SK-N-SH (cell line): ENCODE measurements at regions of chr1 and their contacts with region 1.

Region 1: GRCh38 chr1:27603681-27604578 is at the start of gene AHDC1:
- DNase-seq: peak; percentile 95
- H3K4me3 ChIP-seq: peak within 1 kb of the TSS; percentile 92
- H3K27ac ChIP-seq: peak within 1 kb of the TSS; percentile 60 to 72; a peak in 3 of 4 replicates
- H3K4me1 ChIP-seq: peaks cover 33 to 39% of the 10 kb centered on the region in 2 experiments
- H3K27me3 ChIP-seq: no peaks in the 10 kb centered on the region
- CTCF ChIP-seq: no peak
- EP300 ChIP-seq: no peak
- RAD21 ChIP-seq: no peak; the same call in 1 of the 2 replicates
- polyA plus RNA-seq, gene AHDC1: 3.1 and 8.5 TPM in 2 replicates

Region 2: DNA sequence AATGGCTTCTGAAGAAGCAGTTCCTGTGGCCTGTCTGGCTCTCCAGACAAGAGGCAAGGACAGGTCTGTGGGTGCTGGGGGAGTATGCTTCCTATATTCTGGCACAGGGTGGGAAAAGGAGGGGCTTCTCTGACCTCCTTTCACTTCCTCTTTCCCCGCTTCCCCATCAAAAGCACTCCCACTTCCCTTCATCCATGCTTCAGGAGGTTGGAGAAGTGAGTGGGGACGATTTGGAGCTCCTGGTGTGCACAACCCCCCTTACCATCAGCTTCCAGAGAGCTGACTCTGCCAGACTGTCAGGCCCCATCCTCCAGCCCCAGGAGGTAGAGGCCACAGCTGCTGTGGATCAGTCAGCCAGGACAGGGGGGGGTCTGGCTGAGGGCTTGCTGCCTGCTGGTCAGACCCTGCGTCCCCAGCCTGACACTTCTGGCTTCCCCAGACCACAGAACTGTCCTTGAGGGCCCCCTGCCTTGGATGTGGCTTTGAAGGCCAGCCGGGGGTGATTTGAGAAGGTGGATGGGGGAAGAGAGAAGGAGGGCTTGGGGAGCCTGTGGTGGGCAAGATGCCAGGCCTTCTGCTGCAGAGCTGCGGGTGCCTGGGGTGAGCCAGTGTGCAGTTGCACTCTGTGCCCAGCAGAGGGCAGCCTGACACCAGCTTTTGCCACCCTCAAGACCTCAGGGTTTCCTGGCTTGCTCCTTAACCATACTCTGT is 303.4 kb before region 1 on chr1:
- CTCF ChIA-PET with region 1: interaction called, 97 read pairs
- POLR2A ChIA-PET with region 1: interaction called, 3 read pairs
- DNase-seq: peak; percentile 90
- H3K4me3 ChIP-seq: peak overlapping the region; percentile 12 to 14; a peak in 2 of 4 replicates
- H3K27ac ChIP-seq: peak overlapping the region; percentile 92 to 99
- H3K4me1 ChIP-seq: peaks cover 28 to 52% of the 10 kb centered on the region in 2 experiments
- H3K27me3 ChIP-seq: no peaks in the 10 kb centered on the region
- CTCF ChIP-seq: peak; percentile 92
- EP300 ChIP-seq: peak; percentile 40 to 70; a peak in 3 of 4 replicates
- RAD21 ChIP-seq: peak; percentile 96

Region 3: GRCh38 chr1:27392096-27392777 is 211.7 kb before region 1 on chr1 and contains the start of gene GPR3:
- CTCF ChIA-PET with region 1: interaction called, 112 read pairs
- POLR2A ChIA-PET with region 1: interaction called, 5 read pairs
- DNase-seq: peak; percentile 99
- H3K4me3 ChIP-seq: peak within 1 kb of the TSS; percentile 71 to 94
- H3K27ac ChIP-seq: peak within 1 kb of the TSS; percentile 34 to 60; a peak in 2 of 4 replicates
- H3K4me1 ChIP-seq: peaks cover 0 to 28% of the 10 kb centered on the region in 2 experiments; a peak in 2 of 4 replicates
- H3K27me3 ChIP-seq: no peaks in the 10 kb centered on the region; the same call in 1 of the 2 replicates
- CTCF ChIP-seq: peak; percentile 64
- EP300 ChIP-seq: no peak
- RAD21 ChIP-seq: peak; percentile 45
- polyA plus RNA-seq, gene GPR3: 5.8 and 6.0 TPM in 2 replicates

Region 4: DNA sequence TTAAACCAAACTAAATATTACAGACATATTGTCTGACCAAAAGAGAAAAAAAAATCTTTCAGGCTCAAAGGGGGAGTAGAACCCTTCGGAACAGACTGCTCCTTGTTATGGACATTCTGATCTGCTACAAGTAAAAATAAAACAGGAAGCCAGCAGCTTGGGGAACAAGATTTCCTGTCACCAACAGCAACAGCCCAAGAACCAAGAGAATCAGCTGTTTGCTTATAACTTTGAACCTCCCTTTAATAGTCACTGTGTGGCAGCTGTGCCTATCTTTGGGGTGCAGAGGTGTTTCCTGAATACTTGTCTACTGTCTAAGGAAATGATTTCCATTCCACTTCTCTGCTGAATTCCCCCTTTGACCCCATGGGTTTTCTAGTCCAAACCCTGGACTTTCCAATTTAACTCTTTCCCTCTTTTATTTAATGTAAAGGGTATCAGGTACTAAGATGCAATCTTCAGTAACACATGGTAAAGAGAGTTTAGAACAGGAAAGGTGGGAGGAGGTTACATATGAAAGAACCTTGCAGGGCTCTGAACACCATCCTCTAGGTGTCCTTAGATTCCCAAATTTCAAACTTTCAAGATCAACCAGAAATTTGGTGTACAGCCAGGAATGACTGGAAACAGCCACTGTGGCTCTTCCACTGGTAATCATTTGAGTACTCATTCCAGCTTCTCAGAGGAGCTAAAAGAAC is 172.9 kb before region 1 on chr1:
- CTCF ChIA-PET with region 1: interaction called, 15 read pairs
- POLR2A ChIA-PET with region 1: no interaction called
- DNase-seq: no peak
- H3K4me3 ChIP-seq: no peak overlapping the region
- H3K27ac ChIP-seq: no peak overlapping the region
- H3K4me1 ChIP-seq: peaks cover 1 to 15% of the 10 kb centered on the region in 2 experiments; a peak in 3 of 4 replicates
- H3K27me3 ChIP-seq: no peaks in the 10 kb centered on the region
- CTCF ChIP-seq: no peak
- EP300 ChIP-seq: no peak
- RAD21 ChIP-seq: 0 out of 2 replicates have a peak, but pooled peaks have one; percentile 13

Region 5: DNA sequence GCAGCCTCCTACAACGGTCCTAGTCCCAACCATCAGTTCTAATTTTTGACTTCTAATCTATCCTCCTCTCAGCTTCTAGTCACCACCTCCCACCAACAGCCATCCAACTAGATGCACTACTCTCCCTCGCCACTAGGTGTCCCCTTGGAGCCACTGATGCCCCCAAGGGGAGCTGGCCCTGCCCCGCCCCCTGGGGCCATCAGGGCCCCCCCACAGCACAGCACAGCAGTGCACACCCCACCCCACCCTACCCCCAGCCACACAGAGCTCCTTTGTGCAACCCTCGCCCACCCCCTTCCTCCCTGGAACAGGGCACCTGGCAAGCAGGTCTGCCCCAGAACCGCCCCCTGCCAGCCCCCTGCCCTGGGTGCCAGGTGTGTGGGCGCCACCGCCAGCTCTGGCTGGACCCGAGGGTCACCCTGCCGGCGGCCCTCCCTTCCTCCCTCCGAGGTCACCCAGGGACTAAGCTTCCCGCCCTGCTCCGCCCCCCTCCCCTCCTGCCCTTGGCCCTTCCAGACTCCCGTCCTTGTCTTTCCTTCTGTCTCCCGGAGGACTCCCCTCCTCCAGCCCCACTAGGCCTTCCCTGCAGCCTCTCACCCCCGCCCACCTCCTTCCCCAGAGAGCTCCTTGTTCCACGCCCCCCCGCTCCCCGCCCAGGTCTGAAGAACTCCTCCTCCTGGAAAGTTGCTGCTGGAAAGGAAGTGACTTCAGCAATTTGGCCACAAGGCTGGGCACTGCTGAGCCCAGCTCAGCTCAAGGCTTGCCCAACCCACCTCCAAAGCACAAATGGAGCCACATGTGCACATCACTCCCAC is 46.9 kb before region 1 on chr1:
- CTCF ChIA-PET with region 1: interaction called, 603 read pairs
- POLR2A ChIA-PET with region 1: interaction called, 10 read pairs
- DNase-seq: peak; percentile 94
- H3K4me3 ChIP-seq: no peak overlapping the region
- H3K27ac ChIP-seq: peak overlapping the region; percentile 18 to 23; a peak in 3 of 4 replicates
- H3K4me1 ChIP-seq: peaks cover 29 to 36% of the 10 kb centered on the region in 2 experiments; a peak in 3 of 4 replicates
- H3K27me3 ChIP-seq: no peaks in the 10 kb centered on the region
- CTCF ChIP-seq: peak; percentile 78
- EP300 ChIP-seq: no peak
- RAD21 ChIP-seq: peak; percentile 87

Region 6: DNA sequence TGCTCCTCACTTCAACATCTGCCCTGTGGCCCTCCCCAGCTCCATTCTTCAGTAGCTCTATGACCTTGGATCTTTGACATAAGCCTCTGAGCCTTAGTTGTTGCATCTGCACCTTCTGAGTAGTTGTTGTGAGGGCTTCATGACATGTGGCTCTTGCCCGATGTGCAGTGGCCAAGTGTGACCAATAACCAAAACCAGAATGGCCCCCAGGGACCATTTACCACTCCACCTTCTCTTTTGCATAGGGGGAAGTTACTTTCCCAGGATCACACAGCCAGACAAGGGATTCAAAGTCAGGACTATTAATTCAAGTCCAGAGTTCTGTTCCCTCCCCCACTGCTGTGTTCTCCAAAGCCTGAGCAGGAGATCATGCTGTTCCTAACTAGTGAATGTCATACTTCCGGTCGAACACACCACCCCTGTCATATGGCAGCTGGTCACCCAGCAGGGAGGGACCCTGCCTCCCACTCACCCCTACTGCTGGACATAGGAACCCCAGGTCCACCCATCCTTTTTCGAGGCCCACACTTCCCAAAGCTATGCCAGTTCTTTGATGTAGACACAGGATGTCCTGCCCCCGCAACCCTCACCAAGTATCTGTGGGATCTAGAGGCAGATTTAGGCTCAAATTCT is 27.0 kb after region 1 on chr1:
- CTCF ChIA-PET with region 1: interaction called, 14 read pairs
- POLR2A ChIA-PET with region 1: no interaction called
- DNase-seq: no peak
- H3K4me3 ChIP-seq: no peak overlapping the region
- H3K27ac ChIP-seq: no peak overlapping the region
- H3K4me1 ChIP-seq: peaks cover 0 to 6% of the 10 kb centered on the region in 2 experiments; a peak in 1 of 4 replicates
- H3K27me3 ChIP-seq: no peaks in the 10 kb centered on the region
- CTCF ChIP-seq: no peak
- EP300 ChIP-seq: no peak
- RAD21 ChIP-seq: no peak